ENCODE measurements at regions of chr6 and their contacts with region 1.

Region 1: DNA sequence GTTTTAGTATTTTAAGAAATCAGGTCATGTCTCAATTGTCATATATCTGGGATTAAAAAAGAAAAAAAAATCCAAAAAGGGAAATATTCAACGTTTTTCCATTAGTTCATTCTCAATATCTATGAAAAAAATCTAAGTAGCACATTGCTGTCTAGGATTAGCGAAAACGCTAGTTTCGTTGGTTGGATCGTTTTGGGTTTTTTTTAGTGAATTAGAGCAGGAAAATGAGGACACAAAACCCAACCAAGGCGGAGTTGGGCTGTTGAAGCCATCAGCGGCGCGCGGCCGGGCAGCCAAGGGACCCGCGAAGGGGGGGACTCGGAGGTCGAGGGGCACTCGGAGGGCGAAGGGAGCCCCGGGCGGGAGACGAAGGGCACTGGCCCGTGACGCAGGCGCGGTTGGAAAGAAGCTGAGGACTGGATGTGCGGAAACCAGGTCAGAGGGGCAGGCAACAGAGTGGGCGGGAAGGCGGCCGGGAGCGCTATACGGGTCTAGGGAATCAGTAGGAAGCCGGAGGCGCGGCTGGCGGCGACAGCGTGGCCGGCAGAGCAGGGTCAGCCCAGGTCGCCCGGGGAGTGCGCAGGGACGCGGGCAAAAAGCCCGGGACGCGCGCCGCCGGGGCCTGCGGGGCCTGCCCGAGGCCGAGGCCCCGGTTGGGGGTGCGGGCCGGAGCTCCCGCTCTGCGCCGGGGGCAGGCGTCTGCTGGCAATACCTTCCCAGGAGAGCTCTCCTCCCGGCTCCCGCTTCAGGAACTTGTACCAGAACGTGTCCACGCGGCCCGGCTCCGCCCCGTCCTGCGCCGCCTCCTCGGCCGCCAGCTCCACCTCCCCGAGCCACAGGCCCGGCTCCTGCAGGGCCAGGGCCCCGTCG is 599 bp downstream of the EPM2A start:
- DNase-seq: peak; percentile 87 to 95 (median 91)
- H3K4me3 ChIP-seq: peak overlapping the region; percentile 28 to 70 (median 62)
- H3K27ac ChIP-seq: peak overlapping the region; percentile 94 to 97 (median 95)
- H3K4me1 ChIP-seq: peaks cover 0 to 16% of the 10 kb centered on the region in 2 donors
- H3K27me3 ChIP-seq: no peaks in the 10 kb centered on the region
- CTCF ChIP-seq: no peak
- POLR2A ChIP-seq: peak in 1 of 2 donors; percentile 57

Region 2: GRCh38 chr6:145420599-145420998 is 314.1 kb before region 1 on chr6:
- intact Hi-C with region 1: no loop called
- DNase-seq: no peak
- H3K4me3 ChIP-seq: no peak overlapping the region
- H3K27ac ChIP-seq: no peak overlapping the region
- H3K4me1 ChIP-seq: no peaks in the 10 kb centered on the region
- H3K27me3 ChIP-seq: no peaks in the 10 kb centered on the region
- CTCF ChIP-seq: no peak
- POLR2A ChIP-seq: no peak

Region 3: GRCh38 chr6:145809211-145809610 is 74.5 kb after region 1 on chr6:
- intact Hi-C with region 1: loop called (anchors 10 kb)
- DNase-seq: no peak
- H3K4me3 ChIP-seq: no peak overlapping the region
- H3K27ac ChIP-seq: no peak overlapping the region
- H3K4me1 ChIP-seq: peaks cover 16 to 45% of the 10 kb centered on the region in 2 donors
- H3K27me3 ChIP-seq: no peaks in the 10 kb centered on the region
- CTCF ChIP-seq: no peak
- POLR2A ChIP-seq: no peak

Region 4: DNA sequence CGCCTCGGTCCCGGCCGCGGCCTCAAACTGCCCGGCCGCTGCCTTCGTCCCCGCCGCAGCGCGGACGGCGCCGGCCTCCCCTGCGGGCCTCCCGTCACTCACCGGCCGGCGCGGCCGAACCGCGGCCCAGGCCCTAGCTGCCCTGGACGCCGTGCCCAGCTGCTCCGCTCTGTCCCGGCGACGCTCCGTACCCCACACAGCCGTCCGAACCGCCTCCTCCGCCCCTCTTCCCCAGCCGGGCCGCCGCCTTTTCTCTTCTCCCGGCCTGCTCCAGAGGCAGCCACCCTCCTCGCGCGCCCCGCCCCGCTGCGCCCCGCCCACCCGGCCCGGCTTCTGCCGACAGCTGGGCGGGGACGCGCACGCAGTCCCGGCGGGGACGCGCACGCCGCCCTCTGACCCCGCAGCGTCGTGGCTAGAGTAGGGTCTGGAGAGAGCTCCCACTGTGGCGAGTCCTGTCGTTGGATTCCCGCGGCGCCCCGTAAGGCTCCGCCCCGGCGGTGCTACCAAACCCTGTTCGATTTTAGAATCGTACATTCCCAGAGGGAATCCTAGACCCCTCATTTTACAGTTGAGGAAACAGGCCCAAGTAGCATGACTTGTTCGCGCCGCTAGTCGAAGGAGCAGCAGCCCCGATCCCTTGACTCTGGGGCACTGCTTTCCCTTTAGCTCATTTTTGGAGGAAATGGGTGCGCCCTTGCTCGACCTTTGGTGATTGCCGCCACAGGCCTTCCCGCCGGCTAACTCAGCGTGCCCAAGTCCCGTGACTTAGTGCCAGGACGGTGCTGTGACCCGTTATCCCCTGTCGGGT is 80.0 kb after region 1 on chr6 and contains the start of gene FBXO30:
- intact Hi-C with region 1: loop called (anchors 10 kb)
- DNase-seq: peak; percentile 83 to 94 (median 87)
- H3K4me3 ChIP-seq: peak within 1 kb of the TSS; percentile 36 to 96 (median 82)
- H3K27ac ChIP-seq: peak within 1 kb of the TSS; percentile 79 to 98 (median 95)
- H3K4me1 ChIP-seq: peaks cover 18 to 45% of the 10 kb centered on the region in 2 donors
- H3K27me3 ChIP-seq: no peaks in the 10 kb centered on the region
- CTCF ChIP-seq: peak in 5 of 6 experiments; percentile 15 to 55 (median 37)
- POLR2A ChIP-seq: peak; percentile 72 to 88
- total RNA-seq, gene FBXO30: 4.4 to 13.1 (median 8.6) TPM

Measured in adrenal gland (tissue), 19 donors.